ENCODE measurements at regions of chr22 and their contacts with region 1.

Region 1: DNA sequence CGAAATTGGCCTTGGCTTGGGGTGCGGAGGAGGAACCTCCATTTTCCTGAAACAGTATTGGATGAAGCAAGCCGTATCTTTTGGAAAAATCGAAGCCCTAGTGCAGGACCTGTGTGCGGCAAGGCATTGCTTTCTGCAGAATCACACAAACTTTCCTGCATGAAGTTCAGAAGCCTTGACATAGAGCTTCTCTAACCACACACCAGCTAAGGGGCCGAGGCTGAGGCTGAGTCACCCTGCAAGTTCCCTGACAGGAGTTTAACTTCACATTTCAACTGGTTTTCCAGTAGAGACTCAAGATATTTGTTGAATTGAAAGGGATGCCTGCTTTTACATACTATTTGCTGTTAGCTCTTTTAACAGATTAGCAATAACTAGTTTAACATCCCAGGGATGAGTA is 67.8 kb downstream of the TCF20 start:
- DNase-seq: no peak
- ATAC-seq: no peak
- H3K4me3 Mint-ChIP-seq: no peak overlapping the region
- H3K27ac Mint-ChIP-seq: no peak overlapping the region
- H3K4me1 Mint-ChIP-seq: peaks cover 30% of the 10 kb centered on the region
- H3K27me3 Mint-ChIP-seq: no peaks in the 10 kb centered on the region
- CTCF ChIP-seq: no peak

Region 2: GRCh38 chr22:42180349-42180842 is 22.3 kb before region 1 on chr22:
- CTCF ChIA-PET with region 1: no interaction called
- POLR2A ChIA-PET with region 1: interaction called, 11 read pairs
- intact Hi-C with region 1: no loop called
- DNase-seq: no peak
- ATAC-seq: no peak
- H3K4me3 Mint-ChIP-seq: no peak overlapping the region
- H3K27ac Mint-ChIP-seq: no peak overlapping the region
- H3K4me1 Mint-ChIP-seq: peaks cover 35% of the 10 kb centered on the region
- H3K27me3 Mint-ChIP-seq: no peaks in the 10 kb centered on the region
- CTCF ChIP-seq: no peak